Gastrocnemius medialis (tissue), 4 donors: ENCODE measurements at regions of chr1 and their contacts with region 1.

Region 1: GRCh38 chr1:24027838-24028468 is 47.8 kb upstream of the SRSF10 start:
- DNase-seq: no peak
- ATAC-seq: peak; percentile 72 to 91
- H3K4me3 ChIP-seq: no peak overlapping the region
- H3K27ac ChIP-seq: no peak overlapping the region
- H3K4me1 ChIP-seq: peaks cover 0 to 4% of the 10 kb centered on the region in 2 donors
- H3K27me3 ChIP-seq: no peaks in the 10 kb centered on the region
- CTCF ChIP-seq: peak; percentile 33 to 76 (median 58)
- POLR2A ChIP-seq: no peak

Region 2: GRCh38 chr1:23951571-23952095 is 76.3 kb before region 1 on chr1:
- in situ Hi-C with region 1: loop called in 1 of 4 experiments (anchors 5 kb)
- intact Hi-C with region 1: no loop called
- DNase-seq: peak; percentile 33 to 35
- ATAC-seq: peak; percentile 83 to 92
- H3K4me3 ChIP-seq: no peak overlapping the region
- H3K27ac ChIP-seq: peak overlapping the region in 3 of 4 donors; percentile 37 to 59 (median 40)
- H3K4me1 ChIP-seq: peaks cover 8 to 12% of the 10 kb centered on the region in 2 donors
- H3K27me3 ChIP-seq: no peaks in the 10 kb centered on the region
- CTCF ChIP-seq: no peak
- POLR2A ChIP-seq: no peak

Region 3: DNA sequence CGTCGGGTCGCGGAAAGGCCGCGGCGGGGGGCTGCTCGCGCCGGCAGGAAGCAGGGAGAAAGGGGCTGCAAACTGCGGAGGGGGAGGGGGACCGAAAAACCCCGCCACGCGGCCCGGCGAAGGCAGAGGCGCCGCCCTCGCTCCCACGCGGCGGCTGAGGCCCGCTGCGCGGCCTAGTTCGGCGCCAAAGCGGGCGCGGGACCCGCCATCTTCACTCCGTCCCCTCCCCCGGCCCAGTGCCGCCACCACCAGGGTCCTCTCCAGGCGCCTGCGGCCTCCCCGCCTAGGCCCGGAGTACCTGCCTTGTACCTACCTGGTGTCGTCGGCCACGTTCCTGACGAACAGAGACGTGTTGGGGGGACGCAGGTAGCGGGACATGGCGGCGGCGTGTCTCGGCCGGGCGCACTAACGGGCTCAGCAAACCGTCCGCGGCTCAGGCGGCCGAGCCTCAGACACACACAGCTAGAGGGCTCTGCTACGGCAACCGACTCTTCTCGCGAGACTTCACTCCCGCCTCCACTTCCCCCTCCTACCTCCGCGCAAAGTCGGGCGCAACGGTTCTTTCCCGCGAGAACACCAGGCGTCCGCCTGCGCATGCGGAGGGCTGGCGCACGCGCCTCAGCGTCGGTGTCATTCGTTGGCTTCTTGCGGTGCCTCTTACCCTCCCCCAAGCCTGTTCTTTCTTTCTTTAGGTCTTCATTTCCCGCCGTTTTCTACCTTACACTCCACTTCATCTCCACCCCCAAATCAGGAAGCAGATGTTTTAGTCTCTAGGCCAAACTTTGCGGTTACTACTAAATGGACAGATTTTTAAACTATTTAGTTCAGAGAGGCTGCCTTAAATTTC is 47.9 kb before region 1 on chr1 and contains the start of gene SRSF10:
- in situ Hi-C with region 1: no loop called
- intact Hi-C with region 1: loop called (anchors 2 kb)
- DNase-seq: peak; percentile 98 to 99
- ATAC-seq: peak; percentile 99
- H3K4me3 ChIP-seq: peak within 1 kb of the TSS; percentile 72 to 89 (median 88)
- H3K27ac ChIP-seq: peak within 1 kb of the TSS; percentile 88 to 98 (median 96)
- H3K4me1 ChIP-seq: peaks cover 51 to 52% of the 10 kb centered on the region in 2 donors
- H3K27me3 ChIP-seq: no peaks in the 10 kb centered on the region
- CTCF ChIP-seq: peak in 3 of 5 experiments; percentile 39 to 64 (median 51)
- POLR2A ChIP-seq: peak; percentile 99
- total RNA-seq, gene SRSF10: 20.4 to 49.9 (median 26.5) TPM